A549 (cell line): ENCODE measurements at regions of chr7 and their contacts with region 1.

Region 1: DNA sequence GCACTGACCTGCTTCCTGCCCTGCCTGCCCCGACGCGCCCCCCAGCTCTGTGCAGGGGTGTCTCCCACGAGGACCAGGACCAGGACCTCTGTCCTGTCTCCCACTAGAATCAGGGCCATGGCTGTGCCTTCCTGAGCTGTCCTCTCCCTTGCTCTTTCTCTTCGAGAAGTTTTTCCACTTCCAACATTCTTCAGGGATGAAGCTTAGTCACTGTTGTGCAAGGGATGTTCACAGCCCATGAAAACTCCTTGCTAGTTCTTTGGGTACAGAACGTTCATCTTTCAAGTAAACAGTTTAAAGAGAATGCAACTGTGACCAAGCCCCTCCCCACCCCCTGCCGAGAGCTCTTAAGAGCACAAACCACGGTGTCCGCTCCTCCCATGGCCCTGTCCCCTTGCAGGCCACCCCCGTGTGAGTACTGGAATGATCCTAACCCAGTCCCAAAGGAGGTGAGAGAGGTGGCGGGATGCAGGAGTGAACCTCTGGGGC is 161.1 kb upstream of the RHEB start:
- DNase-seq: no peak
- ATAC-seq: no peak
- H3K4me3 ChIP-seq: no peak overlapping the region
- H3K27ac ChIP-seq: peak overlapping the region; percentile 54 to 61; a peak in 4 of 6 replicates
- H3K4me1 ChIP-seq: peaks cover 3% of the 10 kb centered on the region; the same call in 1 of the 3 replicates
- CTCF ChIP-seq: no peak
- EP300 ChIP-seq: no peak
- POLR2A ChIP-seq: no peak
- RAD21 ChIP-seq: no peak

Region 2: DNA sequence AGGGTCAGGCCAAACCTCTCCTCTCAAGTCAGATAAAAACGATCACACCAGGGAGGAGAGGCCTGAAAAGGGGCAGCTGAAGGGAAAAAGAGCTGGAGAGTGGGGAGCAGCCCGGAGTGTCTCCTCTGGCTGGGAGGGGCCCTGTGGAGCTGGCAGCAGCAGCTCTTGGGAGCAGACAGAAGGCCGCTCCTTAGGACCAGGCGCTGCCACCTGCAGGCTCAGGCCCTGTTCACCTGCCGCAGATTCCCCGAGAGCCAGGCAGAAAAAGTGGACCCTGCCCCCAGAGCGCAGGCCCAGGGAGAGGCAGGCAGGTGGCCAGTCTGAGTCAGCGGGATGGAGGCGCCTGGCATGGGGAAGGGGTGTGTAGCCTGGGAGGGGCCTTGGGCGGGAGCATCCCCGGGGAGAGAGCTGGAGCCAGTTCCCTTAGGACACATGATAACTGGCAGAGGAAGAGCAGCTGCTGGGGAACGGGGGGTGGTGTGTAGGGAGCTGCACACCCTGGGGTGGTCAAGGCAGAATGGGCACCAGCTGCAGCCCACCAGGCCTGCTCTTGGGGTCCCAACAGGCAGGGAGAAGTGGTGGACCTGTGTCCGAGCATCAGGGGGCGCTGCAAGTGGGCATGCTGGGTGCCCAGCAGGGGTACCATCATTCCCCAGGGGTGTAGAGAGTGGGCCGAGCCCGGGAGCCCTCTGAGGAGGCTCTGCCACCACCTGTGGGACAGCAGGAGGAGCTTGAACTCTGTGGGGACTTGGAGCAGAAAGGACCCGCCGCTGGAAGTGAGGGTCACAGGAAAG is 16.2 kb after region 1 on chr7:
- CTCF ChIA-PET with region 1: interaction called, 25 read pairs
- POLR2A ChIA-PET with region 1: interaction called, 3 read pairs
- DNase-seq: peak; percentile 65 to 71
- ATAC-seq: peak; percentile 45 to 77
- H3K4me3 ChIP-seq: no peak overlapping the region
- H3K27ac ChIP-seq: peak overlapping the region; percentile 83 to 89
- H3K4me1 ChIP-seq: peaks cover 70% of the 10 kb centered on the region
- CTCF ChIP-seq: peak; percentile 17; the same call in 2 of the 3 replicates
- EP300 ChIP-seq: no peak; a peak in 1 of 5 replicates
- POLR2A ChIP-seq: no peak
- RAD21 ChIP-seq: peak in 1 of 2 experiments; percentile 17; a peak in 2 of 5 replicates